ENCODE measurements at regions of chr7 and their contacts with region 1.

Region 1: GRCh38 chr7:18666107-18666728 is 170.7 kb downstream of the HDAC9 start:
- H3K4me3 ChIP-seq: no peak overlapping the region
- H3K27ac ChIP-seq: no peak overlapping the region
- H3K4me1 ChIP-seq: no peaks in the 10 kb centered on the region
- CTCF ChIP-seq: peak; percentile 43

Region 2: DNA sequence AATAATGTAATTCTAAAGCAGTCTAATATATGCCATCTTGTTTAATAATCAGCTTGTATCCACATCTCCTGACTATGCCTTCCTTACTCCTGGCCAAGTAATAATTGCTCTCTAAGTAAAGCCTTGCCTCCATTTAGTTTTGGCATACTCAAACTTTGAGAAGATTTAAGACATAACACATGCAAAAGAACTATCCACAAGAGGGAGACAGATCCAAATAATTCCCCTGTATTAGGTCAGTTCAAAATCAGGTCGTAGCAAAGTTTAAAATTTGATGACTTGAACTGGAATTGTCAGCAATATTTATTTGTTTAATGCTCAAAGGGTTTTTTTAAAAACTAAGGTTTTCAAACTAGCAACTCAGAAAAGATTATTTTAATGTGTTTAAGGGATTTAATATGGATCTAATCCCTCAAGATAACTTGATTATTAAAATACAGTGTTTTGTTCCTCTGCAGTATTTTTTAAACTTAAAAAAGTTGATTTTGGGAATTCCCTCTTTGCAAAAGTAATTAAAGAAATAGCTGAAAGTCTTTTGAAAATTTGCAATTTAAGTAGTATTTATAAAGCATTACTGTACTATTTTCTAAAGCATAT is 75.4 kb before region 1 on chr7:
- CTCF ChIA-PET with region 1: interaction called, 24 read pairs
- POLR2A ChIA-PET with region 1: no interaction called
- H3K4me3 ChIP-seq: no peak overlapping the region
- H3K27ac ChIP-seq: no peak overlapping the region
- H3K4me1 ChIP-seq: no peaks in the 10 kb centered on the region
- CTCF ChIP-seq: no peak

Region 3: DNA sequence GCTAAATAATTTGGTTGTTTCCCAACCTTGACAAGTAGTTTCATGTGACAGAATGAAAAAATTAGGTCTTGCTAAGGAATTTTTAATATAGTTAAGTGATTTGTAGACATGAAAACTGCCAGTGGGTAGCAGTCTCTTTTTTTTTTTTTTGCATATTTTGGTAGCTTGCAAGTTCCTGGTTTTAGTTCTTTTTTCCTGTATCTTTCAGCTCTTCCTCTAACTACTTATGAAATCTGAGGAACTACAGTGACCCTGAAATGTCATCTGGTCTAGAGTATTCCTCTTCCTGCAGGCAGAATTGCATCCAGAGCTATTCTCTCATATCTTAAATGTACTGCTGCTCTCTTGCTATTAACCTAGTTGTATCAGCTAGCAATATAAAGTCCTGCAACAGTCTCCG is 10.3 kb before region 1 on chr7:
- CTCF ChIA-PET with region 1: interaction called, 12 read pairs
- POLR2A ChIA-PET with region 1: no interaction called
- H3K4me3 ChIP-seq: no peak overlapping the region
- H3K27ac ChIP-seq: no peak overlapping the region
- H3K4me1 ChIP-seq: no peaks in the 10 kb centered on the region
- CTCF ChIP-seq: no peak

Region 4: DNA sequence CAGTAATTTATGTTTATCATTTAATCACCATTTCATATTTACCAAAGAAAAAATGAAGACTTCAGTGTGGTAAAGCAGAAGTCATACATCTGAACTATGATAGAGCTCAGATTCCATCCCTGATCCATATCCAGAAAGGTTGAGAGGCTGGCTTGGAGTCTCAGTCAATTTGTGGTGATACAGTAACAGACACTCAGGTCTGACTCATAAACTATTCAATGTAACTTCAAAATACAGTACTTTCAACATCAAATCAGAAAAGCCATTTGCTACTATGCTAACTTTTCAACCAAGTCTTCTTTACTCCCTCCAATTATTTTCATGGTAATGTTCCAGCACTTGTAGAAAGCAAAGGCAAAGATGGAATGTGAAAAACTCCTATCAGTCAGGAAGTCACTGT is 19.8 kb after region 1 on chr7:
- CTCF ChIA-PET with region 1: interaction called, 10 read pairs
- POLR2A ChIA-PET with region 1: no interaction called
- H3K4me3 ChIP-seq: no peak overlapping the region
- H3K27ac ChIP-seq: no peak overlapping the region
- H3K4me1 ChIP-seq: no peaks in the 10 kb centered on the region; the same call in 1 of the 2 replicates
- CTCF ChIP-seq: no peak

Region 5: DNA sequence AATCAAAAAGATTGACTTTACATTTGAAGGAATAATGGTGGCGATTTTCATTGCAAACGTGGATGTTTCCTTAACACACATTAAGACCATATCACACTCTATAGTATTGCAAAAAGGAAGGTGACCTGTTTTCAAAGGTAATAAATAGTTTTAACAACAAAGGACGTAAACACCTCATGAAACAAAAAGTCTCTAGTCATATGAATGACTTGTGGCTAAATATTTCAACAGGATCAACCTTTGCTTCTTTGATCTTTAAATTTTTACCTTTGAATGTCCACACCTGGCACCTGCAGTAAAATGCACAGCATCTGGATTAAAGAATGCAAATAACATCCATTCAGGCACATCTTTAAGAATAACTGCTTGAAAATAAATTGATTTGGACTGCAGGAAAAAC is 509.0 kb after region 1 on chr7:
- CTCF ChIA-PET with region 1: no interaction called
- POLR2A ChIA-PET with region 1: no interaction called
- H3K4me3 ChIP-seq: no peak overlapping the region
- H3K27ac ChIP-seq: no peak overlapping the region
- H3K4me1 ChIP-seq: no peaks in the 10 kb centered on the region; the same call in 1 of the 2 replicates
- CTCF ChIP-seq: no peak